ENCODE measurements at regions of chr12 and their contacts with region 1.

Region 1: GRCh38 chr12:43805860-43806736 is at the start of gene TWF1:
- DNase-seq: peak; percentile 88
- H3K4me3 Mint-ChIP-seq: peak within 1 kb of the TSS; percentile 98
- H3K27ac Mint-ChIP-seq: peak within 1 kb of the TSS; percentile 100
- H3K4me1 Mint-ChIP-seq: peaks cover 39% of the 10 kb centered on the region
- H3K27me3 Mint-ChIP-seq: no peaks in the 10 kb centered on the region
- total RNA-seq, gene TWF1: 12.9 to 15.3 TPM

Region 2: DNA sequence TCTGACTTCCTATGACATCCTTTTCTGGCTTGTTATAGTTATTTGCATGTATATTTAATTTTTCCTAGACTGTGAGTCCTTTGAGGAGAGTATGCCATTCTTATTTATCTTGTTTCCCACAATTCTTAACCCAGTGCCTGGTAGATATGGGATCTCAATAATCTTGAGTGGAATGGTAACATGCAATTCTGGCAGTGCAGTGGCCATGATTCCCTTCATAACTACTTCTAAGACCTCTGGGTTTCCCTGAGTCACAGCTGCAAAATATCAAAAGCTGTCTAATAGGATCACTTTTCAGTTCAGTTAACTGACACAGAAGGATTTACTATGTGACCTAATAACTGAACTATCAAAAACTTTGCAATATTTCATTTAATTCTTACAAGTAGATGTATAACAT is 389.1 kb before region 1 on chr12:
- CTCF ChIA-PET with region 1: no interaction called
- intact Hi-C with region 1: no loop called
- DNase-seq: no peak
- H3K4me3 Mint-ChIP-seq: no peak overlapping the region
- H3K27ac Mint-ChIP-seq: no peak overlapping the region
- H3K4me1 Mint-ChIP-seq: no peaks in the 10 kb centered on the region
- H3K27me3 Mint-ChIP-seq: peaks cover 2% of the 10 kb centered on the region

Region 3: GRCh38 chr12:43835656-43836474 is 29.8 kb after region 1 on chr12 and contains the start of gene TMEM117:
- CTCF ChIA-PET with region 1: interaction called, 5 read pairs
- intact Hi-C with region 1: loop called (anchors 1 kb)
- DNase-seq: peak; percentile 62
- H3K4me3 Mint-ChIP-seq: peak within 1 kb of the TSS; percentile 72
- H3K27ac Mint-ChIP-seq: peak within 1 kb of the TSS; percentile 66
- H3K4me1 Mint-ChIP-seq: peaks cover 42% of the 10 kb centered on the region
- H3K27me3 Mint-ChIP-seq: no peaks in the 10 kb centered on the region
- total RNA-seq, gene TMEM117: 1.4 to 2.1 TPM

Region 4: DNA sequence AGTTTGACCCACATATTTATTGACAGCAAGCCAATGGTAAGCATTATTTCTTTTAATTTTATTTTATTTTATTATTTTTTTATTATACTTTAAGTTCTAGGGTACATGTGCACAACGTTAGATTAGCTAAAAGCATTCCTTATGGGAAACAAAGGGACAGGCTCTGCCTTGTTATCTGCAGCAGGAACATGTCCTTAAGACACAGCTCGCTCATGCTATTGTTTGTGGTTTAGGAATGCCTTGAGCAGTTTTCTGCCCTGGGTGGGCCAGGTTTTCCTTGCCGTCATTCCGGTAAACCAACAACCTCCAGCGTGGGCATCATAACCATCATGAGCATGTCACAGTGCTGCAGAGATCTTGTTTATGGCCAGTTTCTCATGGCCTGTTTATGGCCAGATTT is 399.9 kb after region 1 on chr12:
- CTCF ChIA-PET with region 1: no interaction called
- intact Hi-C with region 1: no loop called
- DNase-seq: no peak
- H3K4me3 Mint-ChIP-seq: no peak overlapping the region
- H3K27ac Mint-ChIP-seq: no peak overlapping the region
- H3K4me1 Mint-ChIP-seq: no peaks in the 10 kb centered on the region
- H3K27me3 Mint-ChIP-seq: no peaks in the 10 kb centered on the region

Measured in activated naive CD4-positive, alpha-beta T cell treated with anti-CD3 and anti-CD28 coated beads for 36 hours (primary cell).